ENCODE measurements at regions of chr19 and their contacts with region 1.

Region 1: GRCh38 chr19:39187559-39187957 is 9.2 kb upstream of the NCCRP1 start:
- DNase-seq: no peak
- H3K4me3 ChIP-seq: no peak overlapping the region
- H3K27ac ChIP-seq: no peak overlapping the region
- H3K4me1 ChIP-seq: peaks cover 0 to 9% (median 3%) of the 10 kb centered on the region in 4 donors
- H3K27me3 ChIP-seq: peaks cover 0 to 14% (median 5%) of the 10 kb centered on the region in 3 donors
- CTCF ChIP-seq: peak in 1 of 7 experiments; percentile 29
- EP300 ChIP-seq: no peak
- POLR2A ChIP-seq: no peak

Region 2: DNA sequence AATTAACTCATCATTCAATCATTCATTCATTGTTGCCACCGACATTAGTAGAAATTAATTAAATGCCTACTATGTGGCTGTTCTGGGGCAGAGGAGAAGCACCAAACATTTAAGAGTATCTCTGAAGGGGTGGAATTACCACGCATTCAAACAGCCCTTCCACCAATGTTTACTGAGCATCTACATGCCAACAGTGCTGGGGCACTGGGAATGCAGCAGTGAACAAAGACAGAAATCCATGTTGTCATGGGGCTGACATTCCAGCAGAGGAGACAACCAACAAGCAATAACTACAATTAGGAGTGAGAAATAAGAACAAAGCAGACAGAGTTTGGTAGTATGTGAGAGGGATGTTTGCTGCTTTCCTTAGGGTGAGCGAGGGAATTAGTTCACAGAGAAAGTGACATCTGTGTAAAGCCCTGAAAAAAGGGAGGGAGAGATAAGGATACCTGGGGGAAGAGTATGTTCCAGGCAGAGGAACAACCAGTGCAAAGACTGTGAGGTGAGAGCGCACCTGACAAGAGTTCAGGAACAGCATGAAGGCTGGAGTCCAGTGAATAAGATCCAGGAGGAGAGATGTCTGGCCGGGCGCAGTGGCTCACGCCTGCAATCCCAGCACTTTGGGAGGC is 63.3 kb before region 1 on chr19:
- intact Hi-C with region 1: loop called (anchors 5 kb)
- DNase-seq: no peak
- H3K4me3 ChIP-seq: no peak overlapping the region
- H3K27ac ChIP-seq: no peak overlapping the region
- H3K4me1 ChIP-seq: peaks cover 23 to 60% (median 52%) of the 10 kb centered on the region in 4 donors
- H3K27me3 ChIP-seq: peaks cover 0 to 15% (median 0%) of the 10 kb centered on the region in 3 donors
- CTCF ChIP-seq: no peak
- EP300 ChIP-seq: no peak
- POLR2A ChIP-seq: no peak